MCF 10A (cell line): ENCODE measurements at regions of chr12 and their contacts with region 1.

Region 1: GRCh38 chr12:92034858-92035401 is 110.7 kb downstream of the BTG1 start:
- DNase-seq: peak; percentile 95
- H3K4me3 Mint-ChIP-seq: peak overlapping the region; percentile 76
- H3K27ac Mint-ChIP-seq: peak overlapping the region; percentile 96
- H3K4me1 Mint-ChIP-seq: peaks cover 53% of the 10 kb centered on the region
- H3K27me3 Mint-ChIP-seq: no peaks in the 10 kb centered on the region
- CTCF ChIP-seq: no peak

Region 2: GRCh38 chr12:91276509-91276908 is 758.4 kb before region 1 on chr12:
- CTCF ChIA-PET with region 1: no interaction called
- POLR2A ChIA-PET with region 1: no interaction called
- intact Hi-C with region 1: no loop called
- DNase-seq: no peak
- H3K4me3 Mint-ChIP-seq: no peak overlapping the region
- H3K27ac Mint-ChIP-seq: no peak overlapping the region
- H3K4me1 Mint-ChIP-seq: no peaks in the 10 kb centered on the region
- H3K27me3 Mint-ChIP-seq: peaks cover 83% of the 10 kb centered on the region
- CTCF ChIP-seq: no peak

Region 3: DNA sequence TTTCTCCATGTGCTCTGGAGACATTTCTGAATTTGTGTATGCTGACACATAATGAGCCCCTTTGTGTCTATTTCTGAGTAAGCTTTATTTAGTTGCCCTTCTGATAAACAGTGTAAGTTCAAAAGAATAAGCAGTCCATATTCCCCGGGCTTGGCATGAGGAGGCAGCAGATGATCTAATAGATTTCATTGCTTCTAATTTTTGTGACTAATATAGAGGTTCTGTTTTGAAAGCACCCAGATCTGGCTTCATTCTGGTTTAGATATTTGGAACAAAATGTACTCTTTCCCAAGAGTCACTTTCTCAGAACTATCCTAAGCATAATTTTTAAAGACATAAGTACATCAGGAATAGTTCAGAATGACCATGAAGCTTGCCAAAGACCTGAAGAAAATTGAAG is 180.2 kb before region 1 on chr12:
- CTCF ChIA-PET with region 1: no interaction called
- POLR2A ChIA-PET with region 1: interaction called, 17 read pairs
- intact Hi-C with region 1: no loop called
- DNase-seq: peak; percentile 26
- H3K4me3 Mint-ChIP-seq: peak overlapping the region; percentile 13
- H3K27ac Mint-ChIP-seq: peak overlapping the region; percentile 93
- H3K4me1 Mint-ChIP-seq: peaks cover 41% of the 10 kb centered on the region
- H3K27me3 Mint-ChIP-seq: no peaks in the 10 kb centered on the region
- CTCF ChIP-seq: no peak

Region 4: GRCh38 chr12:91890742-91891141 is 144.2 kb before region 1 on chr12:
- CTCF ChIA-PET with region 1: no interaction called
- POLR2A ChIA-PET with region 1: interaction called, 14 read pairs
- intact Hi-C with region 1: no loop called
- DNase-seq: peak; percentile 73
- H3K4me3 Mint-ChIP-seq: no peak overlapping the region
- H3K27ac Mint-ChIP-seq: peak overlapping the region; percentile 55
- H3K4me1 Mint-ChIP-seq: peaks cover 23% of the 10 kb centered on the region
- H3K27me3 Mint-ChIP-seq: no peaks in the 10 kb centered on the region
- CTCF ChIP-seq: no peak

Region 5: DNA sequence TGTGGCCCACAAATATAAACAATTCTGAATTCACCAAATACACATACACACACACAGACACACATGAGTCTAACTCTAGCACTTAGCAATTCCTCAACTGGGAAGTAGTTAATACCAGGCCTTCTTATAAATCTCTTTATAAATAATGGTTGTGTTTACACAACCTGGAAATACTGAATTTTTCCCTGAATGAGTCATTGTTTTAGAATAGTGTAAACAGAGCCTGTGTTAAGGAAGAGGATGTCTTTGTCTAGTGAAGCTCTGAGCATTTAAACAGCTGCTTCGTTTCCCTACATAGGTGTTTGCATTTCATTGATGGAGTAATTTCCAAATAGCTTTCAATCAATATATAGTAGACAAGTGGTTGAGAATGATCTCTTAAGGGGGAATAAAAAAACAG is 108.1 kb before region 1 on chr12:
- CTCF ChIA-PET with region 1: no interaction called
- POLR2A ChIA-PET with region 1: interaction called, 12 read pairs
- intact Hi-C with region 1: no loop called
- DNase-seq: peak; percentile 57
- H3K4me3 Mint-ChIP-seq: no peak overlapping the region
- H3K27ac Mint-ChIP-seq: peak overlapping the region; percentile 75
- H3K4me1 Mint-ChIP-seq: peaks cover 18% of the 10 kb centered on the region
- H3K27me3 Mint-ChIP-seq: no peaks in the 10 kb centered on the region
- CTCF ChIP-seq: no peak

Region 6: DNA sequence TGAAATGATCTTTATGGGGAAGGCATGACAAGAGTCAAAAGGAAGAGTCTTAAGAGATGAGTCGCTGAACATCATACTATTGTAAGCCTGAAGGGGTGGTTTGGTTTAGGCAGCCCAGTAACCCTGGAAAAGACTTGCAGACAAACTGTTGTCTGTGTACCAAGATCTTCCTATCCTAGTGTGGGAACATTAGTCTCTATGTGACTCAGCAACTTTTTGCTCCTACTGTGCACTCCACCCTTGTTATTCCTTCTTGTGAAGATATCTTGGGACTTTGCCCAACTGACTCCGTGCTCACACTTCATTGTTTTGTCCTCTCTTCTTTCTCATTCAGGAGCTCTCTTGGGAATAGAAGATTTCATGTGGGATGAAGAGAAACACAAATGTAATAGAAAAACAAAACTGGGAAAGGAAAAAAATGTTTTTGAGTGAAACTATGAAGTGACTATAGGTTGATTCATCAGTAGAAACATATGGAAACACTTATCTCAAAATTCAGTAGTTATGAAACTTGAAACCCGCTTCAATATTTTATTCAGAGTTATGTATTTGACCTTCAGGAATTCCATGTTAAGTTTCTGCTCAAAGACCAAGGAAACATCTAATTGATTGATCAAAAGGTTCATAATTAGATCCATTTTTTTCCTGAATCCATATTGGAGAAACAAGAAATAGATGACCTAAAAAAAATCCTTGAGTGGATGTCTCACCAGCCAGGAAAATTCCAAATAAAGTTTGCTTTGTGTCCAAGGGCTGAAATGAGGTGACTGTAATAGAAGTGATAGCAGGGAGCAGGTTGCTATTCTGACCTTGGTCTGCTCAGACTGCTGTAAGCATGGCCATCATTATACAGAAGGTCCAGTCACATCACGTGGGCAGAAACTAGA is 43.5 kb after region 1 on chr12:
- CTCF ChIA-PET with region 1: no interaction called
- POLR2A ChIA-PET with region 1: interaction called, 17 read pairs
- intact Hi-C with region 1: no loop called
- DNase-seq: peak; percentile 96
- H3K4me3 Mint-ChIP-seq: peak overlapping the region; percentile 26
- H3K27ac Mint-ChIP-seq: peak overlapping the region; percentile 95
- H3K4me1 Mint-ChIP-seq: peaks cover 60% of the 10 kb centered on the region
- H3K27me3 Mint-ChIP-seq: no peaks in the 10 kb centered on the region
- CTCF ChIP-seq: no peak